Naive thymus-derived CD4-positive, alpha-beta T cell (primary cell): ENCODE measurements at regions of chr16 and their contacts with region 1.

Region 1: DNA sequence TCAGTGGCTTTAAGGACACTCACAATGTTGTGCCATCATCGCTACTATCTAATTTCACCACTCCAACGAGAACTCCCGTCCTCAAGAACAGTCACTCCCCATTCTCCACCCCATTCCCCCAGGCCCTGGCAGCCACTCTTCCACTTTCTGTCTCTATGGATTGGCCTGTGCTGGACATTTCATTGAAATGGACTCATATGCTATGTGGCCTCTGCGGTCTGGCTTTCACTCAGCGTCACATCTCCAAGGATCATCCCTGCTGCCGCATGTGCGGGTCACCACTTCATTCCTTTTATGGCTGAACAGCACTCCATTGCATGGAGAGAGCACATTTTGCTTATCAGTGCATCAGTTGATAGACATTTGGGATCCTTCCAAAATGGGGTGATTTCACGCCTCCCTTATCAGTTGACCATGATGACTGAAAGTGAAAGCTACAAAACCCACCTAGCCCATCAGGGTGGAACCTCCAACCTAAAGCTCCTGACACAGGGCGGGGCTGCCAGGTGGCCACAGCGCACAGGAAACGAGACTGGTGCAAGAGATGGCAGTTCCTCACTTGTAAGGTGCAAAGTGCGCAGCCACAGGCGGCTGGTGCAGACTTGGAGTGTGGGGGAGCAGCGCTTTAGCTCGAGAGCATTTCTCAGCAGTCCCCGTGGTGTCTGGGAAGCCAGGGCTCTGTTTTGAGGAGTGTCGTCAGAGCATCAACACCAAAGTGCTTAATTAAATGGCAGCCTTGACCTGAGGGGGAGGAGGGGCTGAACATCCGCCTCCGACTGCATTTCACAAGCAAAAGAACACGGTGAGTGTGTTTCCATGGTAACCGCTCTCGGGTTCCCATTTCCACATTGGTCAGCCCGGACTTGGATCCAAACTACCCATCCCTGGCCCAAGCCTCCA is 23.8 kb downstream of the COTL1 start:
- DNase-seq: peak; percentile 47 to 82 (median 73)
- ATAC-seq: peak; percentile 92
- H3K4me3 ChIP-seq: peak overlapping the region; percentile 41
- H3K4me3 Mint-ChIP-seq: peak overlapping the region; percentile 67 to 85 (median 79)
- H3K27ac ChIP-seq: peak overlapping the region; percentile 73
- H3K27ac Mint-ChIP-seq: peak overlapping the region; percentile 88 to 98 (median 96)
- H3K4me1 ChIP-seq: peaks cover 53 to 60% of the 10 kb centered on the region in 2 donors
- H3K4me1 Mint-ChIP-seq: peaks cover 46 to 75% (median 64%) of the 10 kb centered on the region in 7 donors
- H3K27me3 ChIP-seq: no peaks in the 10 kb centered on the region
- H3K27me3 Mint-ChIP-seq: peaks cover 0 to 4% (median 0%) of the 10 kb centered on the region in 5 donors

Region 2: DNA sequence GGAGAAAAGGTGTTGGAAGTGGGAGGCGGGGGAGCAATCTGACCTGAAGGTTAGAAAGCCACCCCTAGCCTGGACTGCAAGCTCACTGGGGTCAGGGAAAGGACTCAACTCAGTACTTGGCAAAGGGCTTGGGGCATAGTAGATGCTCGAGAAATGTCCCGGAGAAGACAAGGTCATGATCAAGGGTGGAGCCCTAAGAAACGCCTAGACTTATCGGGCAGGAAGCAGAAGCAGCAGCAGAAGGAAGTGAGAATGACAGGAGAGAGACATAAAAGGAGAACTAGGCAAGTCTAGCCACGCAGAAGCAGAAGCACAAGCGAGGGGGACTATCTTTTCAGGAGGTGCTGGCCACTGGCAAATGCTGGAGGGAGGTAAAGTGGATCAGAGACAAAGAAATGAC is 13.6 kb after region 1 on chr16:
- CTCF ChIA-PET with region 1: interaction called, 4 read pairs
- POLR2A ChIA-PET with region 1: interaction called, 79 read pairs
- intact Hi-C with region 1: loop called in 1 of 2 experiments (anchors 2 kb)
- DNase-seq: peak in 2 of 9 donors; percentile 46 to 47
- ATAC-seq: peak; percentile 73
- H3K4me3 ChIP-seq: peak overlapping the region; percentile 36
- H3K4me3 Mint-ChIP-seq: peak overlapping the region; percentile 66 to 89 (median 74)
- H3K27ac ChIP-seq: peak overlapping the region; percentile 38
- H3K27ac Mint-ChIP-seq: peak overlapping the region; percentile 76 to 96 (median 94)
- H3K4me1 ChIP-seq: peaks cover 88 to 94% of the 10 kb centered on the region in 2 donors
- H3K4me1 Mint-ChIP-seq: peaks cover 67 to 94% (median 93%) of the 10 kb centered on the region in 7 donors
- H3K27me3 ChIP-seq: no peaks in the 10 kb centered on the region
- H3K27me3 Mint-ChIP-seq: no peaks in the 10 kb centered on the region